A673 (cell line): ENCODE measurements at regions of chr10 and their contacts with region 1.

Region 1: GRCh38 chr10:70549962-70550458 is 52.5 kb downstream of the PRF1 start:
- DNase-seq: peak; percentile 73
- H3K4me3 ChIP-seq: no peak overlapping the region
- H3K27ac ChIP-seq: no peak overlapping the region
- H3K4me1 ChIP-seq: peaks cover 31% of the 10 kb centered on the region
- H3K27me3 ChIP-seq: no peaks in the 10 kb centered on the region
- CTCF ChIP-seq: peak; percentile 87

Region 2: DNA sequence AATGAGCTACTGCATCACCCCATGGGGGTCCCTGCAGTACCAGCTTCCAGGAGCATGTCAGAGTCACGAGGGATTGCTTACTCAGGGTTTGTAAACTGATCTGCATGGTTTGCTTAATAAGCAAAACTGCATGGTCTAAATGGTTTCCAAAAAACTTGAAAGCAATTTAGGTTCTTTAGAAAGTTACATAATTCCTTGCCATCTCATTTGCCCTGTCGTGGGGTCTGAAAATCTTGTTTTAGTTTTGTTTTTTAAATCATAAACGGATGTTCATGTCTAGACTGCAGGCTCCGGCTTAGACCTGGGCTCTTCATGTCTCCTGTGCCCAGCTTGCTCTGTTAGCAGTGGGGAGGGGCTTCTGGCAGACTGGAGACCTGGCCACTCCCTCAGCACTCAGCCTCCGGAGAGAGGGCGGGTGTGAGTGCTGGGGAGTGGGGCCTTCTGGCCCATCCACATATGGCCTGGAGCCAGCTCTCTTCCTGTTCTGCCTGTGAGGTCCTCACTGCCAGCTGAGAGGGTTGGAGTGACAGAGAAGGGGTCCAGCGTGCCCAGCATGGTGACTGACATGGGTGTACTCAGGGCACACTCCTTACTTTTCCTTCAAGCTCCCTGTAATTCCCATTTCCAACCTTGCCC is 35.0 kb after region 1 on chr10:
- CTCF ChIA-PET with region 1: interaction called, 10 read pairs
- POLR2A ChIA-PET with region 1: no interaction called
- intact Hi-C with region 1: no loop called
- DNase-seq: peak; percentile 85
- H3K4me3 ChIP-seq: no peak overlapping the region
- H3K27ac ChIP-seq: no peak overlapping the region
- H3K4me1 ChIP-seq: peaks cover 25% of the 10 kb centered on the region
- H3K27me3 ChIP-seq: no peaks in the 10 kb centered on the region
- CTCF ChIP-seq: no peak

Region 3: GRCh38 chr10:70672165-70673042 is 122.4 kb after region 1 on chr10 and contains the start of gene ADAMTS14:
- CTCF ChIA-PET with region 1: no interaction called
- POLR2A ChIA-PET with region 1: no interaction called
- intact Hi-C with region 1: loop called (anchors 10 kb)
- DNase-seq: peak; percentile 58
- H3K4me3 ChIP-seq: peak within 1 kb of the TSS; percentile 42
- H3K27ac ChIP-seq: no peak within 1 kb of the TSS
- H3K4me1 ChIP-seq: no peaks in the 10 kb centered on the region
- H3K27me3 ChIP-seq: peaks cover 10% of the 10 kb centered on the region
- CTCF ChIP-seq: no peak
- total RNA-seq, gene ADAMTS14: 0.09 and 0.21 TPM in 2 replicates

Region 4: GRCh38 chr10:70758757-70759514 is 208.9 kb after region 1 on chr10:
- CTCF ChIA-PET with region 1: interaction called, 3 read pairs
- POLR2A ChIA-PET with region 1: no interaction called
- intact Hi-C with region 1: loop called (anchors 1 kb)
- DNase-seq: peak; percentile 80
- H3K4me3 ChIP-seq: no peak overlapping the region
- H3K27ac ChIP-seq: no peak overlapping the region
- H3K4me1 ChIP-seq: peaks cover 11% of the 10 kb centered on the region
- H3K27me3 ChIP-seq: no peaks in the 10 kb centered on the region
- CTCF ChIP-seq: peak; percentile 85

Region 5: GRCh38 chr10:70880077-70880534 is 330.1 kb after region 1 on chr10:
- CTCF ChIA-PET with region 1: no interaction called
- POLR2A ChIA-PET with region 1: no interaction called
- intact Hi-C with region 1: loop called (anchors 1 kb)
- DNase-seq: peak; percentile 83
- H3K4me3 ChIP-seq: no peak overlapping the region
- H3K27ac ChIP-seq: no peak overlapping the region
- H3K4me1 ChIP-seq: no peaks in the 10 kb centered on the region
- H3K27me3 ChIP-seq: no peaks in the 10 kb centered on the region
- CTCF ChIP-seq: peak; percentile 93

Region 6: DNA sequence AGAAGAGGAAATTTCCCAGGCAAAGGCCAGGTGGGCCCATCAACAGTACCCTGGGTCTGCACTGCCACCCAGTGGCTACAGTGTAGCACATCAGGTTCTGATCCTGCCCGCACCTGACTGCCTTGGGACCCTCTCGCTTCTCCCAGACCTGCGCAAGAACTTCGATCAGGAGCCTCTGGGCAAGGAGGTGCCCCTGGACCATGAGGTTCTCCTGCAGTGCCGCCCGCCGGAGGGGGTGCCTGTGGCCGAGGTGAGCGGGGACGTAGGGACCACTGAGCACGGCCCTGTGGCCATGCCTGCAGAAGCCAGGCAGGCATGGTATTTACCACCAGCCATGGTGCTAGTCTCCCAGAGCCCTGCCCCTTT is 735.2 kb after region 1 on chr10:
- CTCF ChIA-PET with region 1: no interaction called
- POLR2A ChIA-PET with region 1: no interaction called
- intact Hi-C with region 1: loop called (anchors 10 kb)
- DNase-seq: peak; percentile 67
- H3K4me3 ChIP-seq: no peak overlapping the region
- H3K27ac ChIP-seq: no peak overlapping the region
- H3K4me1 ChIP-seq: peaks cover 10% of the 10 kb centered on the region
- H3K27me3 ChIP-seq: no peaks in the 10 kb centered on the region
- CTCF ChIP-seq: peak; percentile 81